Lower lobe of right lung (tissue), 2 donors: ENCODE measurements at regions of chr3 and their contacts with region 1.

Region 1: DNA sequence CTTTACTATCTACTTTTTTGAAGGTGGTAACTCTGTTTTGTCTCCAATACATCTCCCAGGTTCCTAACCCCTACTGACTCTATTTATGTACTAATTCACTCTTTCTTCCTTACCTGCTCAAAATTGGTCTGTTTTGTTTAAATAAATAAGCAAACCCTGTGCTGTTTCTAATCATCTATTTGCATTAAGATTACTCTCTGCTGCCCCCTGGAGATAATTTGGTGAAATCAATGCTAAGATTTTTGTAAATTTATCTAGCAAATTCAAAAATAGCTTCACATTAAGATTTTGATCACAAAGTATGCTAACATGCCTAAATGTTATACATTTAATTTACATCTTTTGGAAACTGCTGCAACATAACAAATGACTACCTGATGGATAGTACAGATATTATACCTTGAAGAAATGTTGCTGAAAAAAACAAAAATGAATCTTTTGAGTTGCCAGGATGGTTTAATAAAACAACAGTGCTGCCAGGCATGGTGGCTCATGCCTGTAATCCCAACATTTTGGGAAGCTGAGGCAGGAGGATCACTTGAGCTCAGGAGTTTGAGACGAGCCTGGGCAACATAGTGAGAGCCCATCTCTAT is 4.4 kb upstream of the CD200R1 start:
- DNase-seq: no peak
- ATAC-seq: no peak
- H3K4me3 ChIP-seq: no peak overlapping the region
- H3K27ac ChIP-seq: no peak overlapping the region
- H3K4me1 ChIP-seq: peaks cover 17% of the 10 kb centered on the region
- H3K27me3 ChIP-seq: no peaks in the 10 kb centered on the region
- CTCF ChIP-seq: peak; percentile 74

Region 2: DNA sequence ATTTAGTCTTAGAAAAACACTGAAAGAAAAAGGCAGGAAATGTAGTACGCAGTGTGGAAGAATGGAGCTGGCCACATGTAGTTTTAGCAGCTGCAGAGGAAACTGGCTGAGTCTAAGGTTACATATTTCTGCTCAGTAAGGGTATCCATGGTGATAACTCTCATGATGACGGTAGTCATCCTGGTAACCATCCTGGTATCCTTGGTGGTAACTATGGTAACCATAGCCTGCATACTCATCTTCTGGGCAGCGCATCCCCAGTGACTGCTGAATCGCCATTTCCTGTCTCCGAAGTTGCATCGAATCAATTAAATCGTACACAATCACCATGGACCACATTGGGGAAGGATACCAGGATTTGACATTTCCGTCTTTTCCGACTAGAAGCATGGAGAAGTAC is 374.1 kb before region 1 on chr3:
- intact Hi-C with region 1: no loop called
- DNase-seq: no peak
- ATAC-seq: no peak
- H3K4me3 ChIP-seq: no peak overlapping the region
- H3K27ac ChIP-seq: peak overlapping the region; percentile 12
- H3K4me1 ChIP-seq: no peaks in the 10 kb centered on the region
- H3K27me3 ChIP-seq: no peaks in the 10 kb centered on the region
- CTCF ChIP-seq: no peak

Region 3: DNA sequence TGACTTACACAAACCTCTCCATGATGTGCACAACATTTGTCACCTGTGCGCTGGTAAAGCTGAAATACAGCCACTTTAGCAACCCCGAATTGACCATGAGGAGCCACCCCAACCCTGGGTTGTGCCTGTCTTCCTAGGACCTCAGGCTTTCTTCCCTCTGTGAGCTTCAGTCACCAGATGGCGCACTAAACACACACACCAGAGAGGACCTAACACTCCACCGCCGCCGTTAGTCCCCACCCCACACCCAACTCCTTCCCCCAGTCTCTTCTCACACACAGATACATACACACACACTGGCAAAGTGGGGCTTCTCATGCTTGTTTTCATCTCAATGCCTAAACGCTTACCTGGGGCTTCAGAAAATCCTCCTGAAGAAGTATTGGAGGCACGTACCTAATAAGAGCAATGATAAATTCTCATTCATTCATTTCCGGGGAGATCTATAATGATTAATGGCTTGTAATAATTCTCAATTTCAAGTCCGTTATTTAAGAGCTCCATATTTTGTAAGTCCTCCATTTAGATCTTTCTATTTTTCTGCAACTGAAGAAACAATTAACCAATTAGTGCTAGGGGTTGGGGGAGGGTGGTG is 336.3 kb before region 1 on chr3:
- intact Hi-C with region 1: loop called (anchors 5 kb)
- DNase-seq: peak; percentile 81
- ATAC-seq: peak; percentile 90 to 92
- H3K4me3 ChIP-seq: no peak overlapping the region
- H3K27ac ChIP-seq: no peak overlapping the region
- H3K4me1 ChIP-seq: peaks cover 35% of the 10 kb centered on the region
- H3K27me3 ChIP-seq: no peaks in the 10 kb centered on the region
- CTCF ChIP-seq: peak; percentile 82